H1 (cell line): ENCODE measurements at regions of chr11 and their contacts with region 1.

Region 1: GRCh38 chr11:91837411-91838330 is 386.9 kb upstream of the FAT3 start:
- DNase-seq: no peak
- H3K4me3 ChIP-seq: no peak overlapping the region
- H3K27ac ChIP-seq: no peak overlapping the region
- H3K4me1 ChIP-seq: no peaks in the 10 kb centered on the region
- H3K27me3 ChIP-seq: no peaks in the 10 kb centered on the region
- CTCF ChIP-seq: no peak
- EP300 ChIP-seq: no peak
- POLR2A ChIP-seq: no peak
- RAD21 ChIP-seq: no peak

Region 2: GRCh38 chr11:91850533-91851275 is 13.0 kb after region 1 on chr11:
- CTCF ChIA-PET with region 1: interaction called, 21 read pairs
- POLR2A ChIA-PET with region 1: no interaction called
- DNase-seq: no peak
- H3K4me3 ChIP-seq: no peak overlapping the region
- H3K27ac ChIP-seq: no peak overlapping the region
- H3K4me1 ChIP-seq: peaks cover 0 to 3% (median 0%) of the 10 kb centered on the region in 4 experiments; a peak in 1 of 7 replicates
- H3K27me3 ChIP-seq: no peaks in the 10 kb centered on the region
- CTCF ChIP-seq: no peak
- EP300 ChIP-seq: no peak
- POLR2A ChIP-seq: no peak
- RAD21 ChIP-seq: no peak